Activated CD8-positive, alpha-beta T cell treated with anti-CD3 and anti-CD28 coated beads, Interleukin-2, amount 10 ng/mL, durations not matched to agents 7 days and 5 days (primary cell): ENCODE measurements at regions of chr22 and their contacts with region 1.

Region 1: GRCh38 chr22:37862570-37863325 is 13.5 kb downstream of the EIF3L start:
- DNase-seq: no peak
- ATAC-seq: no peak
- H3K4me3 Mint-ChIP-seq: no peak overlapping the region
- H3K27ac Mint-ChIP-seq: no peak overlapping the region
- H3K4me1 Mint-ChIP-seq: peaks cover 3% of the 10 kb centered on the region
- H3K27me3 Mint-ChIP-seq: no peaks in the 10 kb centered on the region

Region 2: GRCh38 chr22:37807410-37808293 is 55.1 kb before region 1 on chr22 and contains the start of gene GCAT:
- CTCF ChIA-PET with region 1: interaction called, 10 read pairs
- POLR2A ChIA-PET with region 1: no interaction called
- DNase-seq: peak; percentile 96
- ATAC-seq: peak; percentile 98
- H3K4me3 Mint-ChIP-seq: peak within 1 kb of the TSS; percentile 80
- H3K27ac Mint-ChIP-seq: peak within 1 kb of the TSS; percentile 43
- H3K4me1 Mint-ChIP-seq: peaks cover 54% of the 10 kb centered on the region
- H3K27me3 Mint-ChIP-seq: peaks cover 38% of the 10 kb centered on the region
- total RNA-seq, gene GCAT: 14.3 to 18.3 TPM

Region 3: GRCh38 chr22:37843741-37843990 is 19.1 kb before region 1 on chr22:
- CTCF ChIA-PET with region 1: interaction called, 20 read pairs
- POLR2A ChIA-PET with region 1: no interaction called
- DNase-seq: peak; percentile 62
- ATAC-seq: peak; percentile 52
- H3K4me3 Mint-ChIP-seq: peak overlapping the region; percentile 84
- H3K27ac Mint-ChIP-seq: peak overlapping the region; percentile 87
- H3K4me1 Mint-ChIP-seq: peaks cover 30% of the 10 kb centered on the region
- H3K27me3 Mint-ChIP-seq: no peaks in the 10 kb centered on the region

Region 4: GRCh38 chr22:37880668-37881440 is 18.1 kb after region 1 on chr22:
- CTCF ChIA-PET with region 1: interaction called, 39 read pairs
- POLR2A ChIA-PET with region 1: interaction called, 3 read pairs
- DNase-seq: no peak
- ATAC-seq: no peak
- H3K4me3 Mint-ChIP-seq: no peak overlapping the region
- H3K27ac Mint-ChIP-seq: no peak overlapping the region
- H3K4me1 Mint-ChIP-seq: peaks cover 3% of the 10 kb centered on the region
- H3K27me3 Mint-ChIP-seq: no peaks in the 10 kb centered on the region

Region 5: DNA sequence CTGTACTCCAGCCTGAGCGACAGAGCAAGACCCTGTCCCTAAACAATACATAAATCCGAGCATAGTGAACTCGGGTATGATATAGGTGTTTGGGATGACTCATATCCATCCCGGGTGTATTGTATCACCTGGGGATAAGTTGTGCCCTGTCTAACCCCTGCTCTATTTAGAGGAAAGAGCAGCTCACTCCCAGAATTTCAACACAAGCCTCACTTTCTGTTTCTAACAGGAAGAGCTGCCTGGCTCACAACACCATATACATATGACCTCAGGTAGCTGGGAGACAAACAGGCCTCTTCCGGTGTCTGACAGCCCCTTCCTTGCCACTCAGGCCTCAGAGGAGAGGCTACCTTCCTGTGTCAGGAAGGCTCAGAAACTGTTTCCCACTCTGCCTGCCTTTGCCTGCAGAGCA is 33.4 kb after region 1 on chr22:
- CTCF ChIA-PET with region 1: interaction called, 11 read pairs
- POLR2A ChIA-PET with region 1: interaction called, 4 read pairs
- DNase-seq: peak; percentile 77
- ATAC-seq: peak; percentile 98
- H3K4me3 Mint-ChIP-seq: peak overlapping the region; percentile 61
- H3K27ac Mint-ChIP-seq: peak overlapping the region; percentile 96
- H3K4me1 Mint-ChIP-seq: peaks cover 40% of the 10 kb centered on the region
- H3K27me3 Mint-ChIP-seq: no peaks in the 10 kb centered on the region